ENCODE measurements at regions of chr22 and their contacts with region 1.

Region 1: DNA sequence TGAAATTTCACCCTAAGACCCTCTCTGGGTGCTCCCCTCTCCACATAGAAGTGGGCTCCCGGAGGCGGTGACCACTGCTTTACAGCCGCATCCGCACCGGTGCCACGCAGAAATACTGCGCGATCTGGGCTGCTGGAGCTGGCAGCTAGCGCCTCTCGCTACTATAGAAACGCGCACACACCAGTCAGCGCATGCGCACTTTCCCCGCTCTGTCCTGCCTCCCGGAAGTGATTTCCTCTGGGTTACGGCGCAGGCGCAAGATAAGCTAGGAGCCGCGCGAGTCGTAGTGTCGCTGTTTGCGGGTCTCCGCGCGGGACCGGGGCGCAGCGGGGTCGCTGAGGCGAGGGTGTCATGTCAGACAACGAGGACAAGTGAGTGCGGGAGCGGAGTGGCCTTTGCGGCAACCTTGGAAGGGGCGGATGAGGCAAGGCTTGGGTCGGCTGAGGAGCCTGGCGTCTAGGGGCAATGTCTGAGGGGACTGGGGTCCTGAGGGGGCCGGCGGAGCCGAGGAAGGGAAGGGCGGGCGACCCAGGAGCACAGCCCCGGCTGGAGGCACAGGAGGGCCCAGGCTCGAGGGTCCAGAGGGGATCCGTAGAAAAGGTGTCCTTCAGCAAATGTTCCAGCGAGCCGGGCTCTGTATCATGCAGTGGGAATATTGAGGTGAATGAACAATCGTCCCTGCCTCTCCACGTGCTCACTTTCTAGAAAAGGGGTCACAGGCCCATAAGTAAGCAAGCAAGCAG is at the starts of genes C22orf23 and POLR2F:
- DNase-seq: peak; percentile 97
- H3K4me3 ChIP-seq: peak within 1 kb of the TSS; percentile 7 to 96 (median 54)
- H3K27ac ChIP-seq: no peak within 1 kb of the TSS
- H3K4me1 ChIP-seq: peaks cover 14% of the 10 kb centered on the region
- H3K27me3 ChIP-seq: no peaks in the 10 kb centered on the region
- CTCF ChIP-seq: no peak
- POLR2A ChIP-seq: peak; percentile 93
- total RNA-seq, gene C22orf23: 0.44 and 0.46 TPM in 2 replicates
- total RNA-seq, gene POLR2F: 98.3 and 106 TPM in 2 replicates

Region 2: DNA sequence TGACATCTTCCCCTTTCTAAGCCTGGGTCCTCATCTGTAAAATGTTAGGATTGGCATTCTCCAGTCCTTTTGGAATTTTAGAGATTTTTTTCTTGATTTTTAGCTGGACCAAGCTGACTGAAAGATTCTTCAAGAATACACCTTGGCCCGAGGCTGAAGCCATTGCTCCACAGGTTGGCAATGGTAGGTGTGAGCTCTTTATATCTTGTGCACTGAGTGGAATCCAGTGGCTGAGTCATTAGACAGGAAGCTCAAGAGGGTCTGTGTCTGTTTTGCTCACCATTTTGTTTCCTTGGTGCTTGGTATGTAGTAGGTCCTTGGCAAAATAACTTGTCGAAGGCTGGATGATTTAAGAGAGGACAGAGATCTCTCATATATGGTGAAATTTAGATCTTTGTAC is 98.1 kb before region 1 on chr22:
- CTCF ChIA-PET with region 1: no interaction called
- POLR2A ChIA-PET with region 1: no interaction called
- dilution Hi-C with region 1: no loop called
- intact Hi-C with region 1: no loop called
- DNase-seq: no peak
- H3K4me3 ChIP-seq: no peak overlapping the region
- H3K27ac ChIP-seq: no peak overlapping the region
- H3K4me1 ChIP-seq: peaks cover 14% of the 10 kb centered on the region
- H3K27me3 ChIP-seq: no peaks in the 10 kb centered on the region
- CTCF ChIP-seq: no peak
- POLR2A ChIP-seq: no peak

Region 3: GRCh38 chr22:37905534-37906363 is 47.9 kb before region 1 on chr22 and contains the start of gene MICALL1:
- CTCF ChIA-PET with region 1: interaction called, 6 read pairs
- POLR2A ChIA-PET with region 1: no interaction called
- dilution Hi-C with region 1: no loop called
- intact Hi-C with region 1: loop called (anchors 5 kb)
- DNase-seq: peak; percentile 69
- H3K4me3 ChIP-seq: peak within 1 kb of the TSS; percentile 55 to 76 (median 67)
- H3K27ac ChIP-seq: peak within 1 kb of the TSS; percentile 94
- H3K4me1 ChIP-seq: peaks cover 20% of the 10 kb centered on the region
- H3K27me3 ChIP-seq: no peaks in the 10 kb centered on the region
- CTCF ChIP-seq: no peak
- POLR2A ChIP-seq: peak; percentile 73
- total RNA-seq, gene MICALL1: 65.2 and 66.9 TPM in 2 replicates

Region 4: DNA sequence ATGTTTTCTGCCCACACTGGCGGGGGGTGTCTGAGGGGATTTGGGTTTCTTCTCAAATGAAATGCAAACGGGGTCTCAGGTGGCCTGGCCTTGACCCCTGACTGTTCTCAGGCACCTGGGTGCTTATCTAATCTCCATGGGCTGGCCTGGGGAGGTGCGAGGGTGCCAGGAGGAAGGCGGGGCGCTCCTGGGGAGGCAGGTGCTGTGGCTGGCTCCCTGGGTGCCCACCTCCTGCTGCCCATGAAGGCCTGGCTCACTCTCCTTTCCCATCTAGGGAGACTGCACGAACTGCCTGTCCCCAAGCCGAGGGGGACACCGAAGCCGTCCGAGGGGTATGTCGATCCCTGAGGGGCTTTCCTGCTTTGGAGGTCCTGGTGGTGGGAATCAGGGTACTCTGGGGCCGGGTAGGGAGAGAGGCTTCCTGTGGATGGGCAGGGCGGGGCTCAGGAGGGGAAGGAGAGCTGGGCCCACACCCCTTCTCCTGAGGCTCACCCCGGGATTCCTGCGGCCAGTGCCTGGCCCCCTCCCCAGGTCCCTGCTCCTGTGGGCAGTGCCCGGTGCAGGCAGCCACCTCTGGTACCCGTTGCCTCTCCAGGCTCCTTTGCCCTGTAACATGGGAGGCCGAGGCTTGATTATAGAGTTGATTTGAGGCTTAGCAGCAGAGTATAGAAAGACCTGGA is 29.1 kb before region 1 on chr22:
- CTCF ChIA-PET with region 1: no interaction called
- POLR2A ChIA-PET with region 1: no interaction called
- dilution Hi-C with region 1: no loop called
- intact Hi-C with region 1: no loop called
- DNase-seq: no peak
- H3K4me3 ChIP-seq: no peak overlapping the region
- H3K27ac ChIP-seq: no peak overlapping the region
- H3K4me1 ChIP-seq: no peaks in the 10 kb centered on the region
- H3K27me3 ChIP-seq: no peaks in the 10 kb centered on the region
- CTCF ChIP-seq: no peak
- POLR2A ChIP-seq: no peak

Region 5: GRCh38 chr22:38554281-38554680 is 600.7 kb after region 1 on chr22:
- CTCF ChIA-PET with region 1: no interaction called
- POLR2A ChIA-PET with region 1: no interaction called
- dilution Hi-C with region 1: no loop called
- intact Hi-C with region 1: no loop called
- DNase-seq: no peak
- H3K4me3 ChIP-seq: no peak overlapping the region
- H3K27ac ChIP-seq: no peak overlapping the region
- H3K4me1 ChIP-seq: no peaks in the 10 kb centered on the region
- H3K27me3 ChIP-seq: no peaks in the 10 kb centered on the region
- CTCF ChIP-seq: no peak
- POLR2A ChIP-seq: no peak